ENCODE measurements at regions of chr17 and their contacts with region 1.

Region 1: DNA sequence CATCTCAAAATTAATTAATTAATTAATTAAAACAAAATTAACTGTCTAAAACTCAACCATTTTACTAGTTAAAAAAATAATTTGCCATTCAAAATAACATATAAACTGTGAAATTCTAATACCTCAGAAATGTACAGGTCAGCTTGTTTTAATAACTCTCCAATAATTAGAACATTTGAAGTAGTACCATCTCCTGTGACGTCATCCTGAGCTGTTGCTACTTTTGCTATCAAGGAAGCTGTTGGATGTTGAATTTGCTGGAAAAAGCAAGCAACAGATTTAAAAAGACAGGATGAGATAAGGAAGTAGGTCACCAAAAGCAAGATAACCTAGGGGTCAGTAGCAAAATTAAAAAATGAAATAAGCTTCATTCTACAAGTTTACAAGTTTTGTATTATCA is 2.8 kb downstream of the CCT6B start:
- DNase-seq: no peak
- H3K4me3 ChIP-seq: no peak overlapping the region
- H3K27ac ChIP-seq: no peak overlapping the region
- H3K4me1 ChIP-seq: peaks cover 33% of the 10 kb centered on the region
- H3K27me3 ChIP-seq: no peaks in the 10 kb centered on the region
- CTCF ChIP-seq: no peak

Region 2: DNA sequence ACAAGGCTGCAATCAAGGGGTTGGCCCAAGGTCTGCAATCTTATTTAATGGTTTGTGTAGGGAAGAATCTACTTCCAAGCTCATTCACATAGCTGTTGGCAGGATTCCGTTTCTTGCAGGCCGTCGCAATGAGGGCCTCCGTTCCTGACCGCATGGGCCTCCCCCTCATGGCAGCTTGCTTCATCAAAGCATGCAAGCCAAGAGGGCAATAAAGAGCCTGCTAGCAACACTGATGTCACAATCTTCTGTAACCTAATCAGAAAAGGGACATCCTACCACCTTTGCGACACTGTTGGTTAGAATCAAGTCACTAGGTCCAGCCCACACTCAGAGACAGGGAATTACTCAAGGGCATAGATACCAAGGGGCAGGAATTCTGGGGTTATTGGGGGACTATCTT is 92.7 kb before region 1 on chr17:
- intact Hi-C with region 1: no loop called
- DNase-seq: no peak
- H3K4me3 ChIP-seq: no peak overlapping the region
- H3K27ac ChIP-seq: no peak overlapping the region
- H3K4me1 ChIP-seq: no peaks in the 10 kb centered on the region
- H3K27me3 ChIP-seq: peaks cover 24% of the 10 kb centered on the region
- CTCF ChIP-seq: no peak

Region 3: DNA sequence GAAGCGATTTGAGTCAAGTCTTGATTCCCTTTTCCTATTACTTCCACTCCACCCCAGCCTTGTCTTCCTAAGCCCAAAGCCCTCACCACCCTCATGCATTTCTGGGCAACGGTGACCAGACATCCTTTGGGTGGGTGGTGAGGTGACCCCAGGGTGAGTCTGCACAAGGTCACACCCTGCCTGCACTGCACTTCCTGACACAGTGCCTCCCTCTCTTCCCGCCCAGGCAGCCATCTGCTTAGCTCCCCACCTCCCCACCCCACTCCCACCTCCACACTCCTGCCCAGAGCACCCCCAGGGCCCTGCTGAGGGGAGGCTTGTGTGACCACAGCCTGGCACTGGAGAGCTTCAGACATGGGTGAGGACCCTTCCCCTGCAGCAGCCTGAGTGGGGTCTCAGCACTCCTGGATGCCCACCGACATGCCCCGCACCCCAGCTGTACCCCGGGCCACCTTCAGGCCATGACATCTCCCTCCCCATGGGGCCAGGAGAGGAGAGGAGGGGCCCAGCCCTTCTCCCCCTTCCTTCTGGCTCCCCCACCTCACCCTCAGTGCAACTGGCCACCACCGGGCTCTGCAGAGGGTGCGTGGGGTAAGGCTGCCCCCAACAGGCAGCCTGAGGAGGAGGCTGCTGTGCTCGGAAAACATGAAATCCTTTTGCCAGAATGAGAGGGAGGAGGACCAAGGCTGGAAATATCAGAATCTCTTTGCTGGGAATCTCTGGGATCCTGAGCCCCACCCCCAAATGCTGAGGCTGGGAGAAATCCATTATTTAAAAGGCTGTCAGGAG is 65.8 kb before region 1 on chr17:
- intact Hi-C with region 1: no loop called
- DNase-seq: no peak
- H3K4me3 ChIP-seq: no peak overlapping the region
- H3K27ac ChIP-seq: no peak overlapping the region
- H3K4me1 ChIP-seq: no peaks in the 10 kb centered on the region
- H3K27me3 ChIP-seq: peaks cover 99% of the 10 kb centered on the region
- CTCF ChIP-seq: peak; percentile 55

Region 4: DNA sequence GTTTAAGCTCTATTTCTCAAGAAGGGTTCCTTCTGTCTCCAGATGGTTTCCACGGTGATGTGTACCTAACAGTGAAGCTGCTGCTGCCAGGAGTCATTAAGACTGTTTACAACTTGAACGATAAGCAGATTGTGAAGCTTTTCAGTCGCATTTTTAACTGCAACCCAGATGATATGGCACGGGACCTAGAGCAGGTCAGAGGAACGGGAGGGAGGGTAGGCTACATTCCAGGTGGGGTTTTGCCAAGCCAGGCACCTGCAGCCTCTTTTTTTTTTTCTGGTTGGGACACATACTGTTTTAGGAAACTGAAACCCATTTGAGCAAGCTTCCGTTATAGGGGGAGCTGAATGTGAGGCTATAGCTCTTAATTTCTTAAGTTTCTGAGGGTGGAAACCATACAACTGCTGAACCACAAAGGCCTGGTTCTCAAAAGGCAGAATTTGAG is 32.5 kb after region 1 on chr17:
- intact Hi-C with region 1: loop called (anchors 5 kb)
- DNase-seq: no peak
- H3K4me3 ChIP-seq: no peak overlapping the region
- H3K27ac ChIP-seq: peak overlapping the region; percentile 49
- H3K4me1 ChIP-seq: peaks cover 12% of the 10 kb centered on the region
- H3K27me3 ChIP-seq: no peaks in the 10 kb centered on the region
- CTCF ChIP-seq: no peak